ENCODE measurements at regions of chr7 and their contacts with region 1.

Region 1: GRCh38 chr7:34069630-34070270 is 164.4 kb downstream of the BMPER start:
- DNase-seq: no peak
- H3K4me3 ChIP-seq: no peak overlapping the region
- H3K27ac ChIP-seq: no peak overlapping the region
- H3K27me3 ChIP-seq: no peaks in the 10 kb centered on the region
- CTCF ChIP-seq: no peak

Region 2: DNA sequence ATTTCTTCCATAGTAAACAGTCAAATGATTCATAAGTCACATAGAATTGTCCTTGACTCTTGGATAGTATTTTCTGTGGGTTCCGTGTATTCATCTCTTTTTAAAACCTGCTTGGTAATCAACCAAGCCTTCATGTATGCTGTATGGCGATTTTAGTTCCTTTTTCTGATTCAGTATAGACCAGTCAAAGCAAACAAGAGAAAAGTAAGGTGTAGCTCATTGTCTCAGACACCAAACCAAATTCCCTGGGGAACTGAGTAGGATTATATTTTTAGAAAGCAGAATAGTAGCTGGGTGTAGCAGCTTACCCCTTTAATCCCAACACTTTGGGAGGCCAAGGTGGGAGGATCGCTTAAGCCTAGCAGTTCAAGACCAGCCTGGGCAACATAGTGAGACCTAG is 699.9 kb before region 1 on chr7:
- CTCF ChIA-PET with region 1: no interaction called
- POLR2A ChIA-PET with region 1: no interaction called
- DNase-seq: no peak
- H3K4me3 ChIP-seq: no peak overlapping the region
- H3K27ac ChIP-seq: no peak overlapping the region
- H3K27me3 ChIP-seq: no peaks in the 10 kb centered on the region
- CTCF ChIP-seq: no peak

Region 3: DNA sequence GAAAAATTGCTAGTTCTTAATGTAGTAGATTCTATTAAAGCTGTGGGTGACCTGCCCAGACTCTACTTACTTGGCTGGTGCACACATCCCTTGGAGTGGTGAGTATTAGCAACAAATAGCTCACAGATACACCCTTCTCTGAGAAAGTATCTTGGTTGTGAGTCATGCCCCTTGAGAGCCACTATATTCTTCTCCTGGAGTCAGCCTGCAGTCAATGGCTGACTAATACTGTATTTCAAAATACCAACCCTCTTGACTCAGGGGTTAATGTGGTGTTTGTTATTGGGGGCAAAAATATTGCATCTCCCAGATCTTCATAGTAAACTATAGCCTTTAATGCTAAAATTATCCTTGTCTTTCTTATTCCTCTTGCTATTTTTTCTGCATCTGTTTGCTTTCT is 190.5 kb after region 1 on chr7:
- CTCF ChIA-PET with region 1: no interaction called
- POLR2A ChIA-PET with region 1: interaction called, 12 read pairs
- DNase-seq: peak; percentile 49
- H3K4me3 ChIP-seq: no peak overlapping the region
- H3K27ac ChIP-seq: no peak overlapping the region
- H3K27me3 ChIP-seq: no peaks in the 10 kb centered on the region
- CTCF ChIP-seq: no peak